ENCODE measurements at regions of chr6 and their contacts with region 1.

Region 1: DNA sequence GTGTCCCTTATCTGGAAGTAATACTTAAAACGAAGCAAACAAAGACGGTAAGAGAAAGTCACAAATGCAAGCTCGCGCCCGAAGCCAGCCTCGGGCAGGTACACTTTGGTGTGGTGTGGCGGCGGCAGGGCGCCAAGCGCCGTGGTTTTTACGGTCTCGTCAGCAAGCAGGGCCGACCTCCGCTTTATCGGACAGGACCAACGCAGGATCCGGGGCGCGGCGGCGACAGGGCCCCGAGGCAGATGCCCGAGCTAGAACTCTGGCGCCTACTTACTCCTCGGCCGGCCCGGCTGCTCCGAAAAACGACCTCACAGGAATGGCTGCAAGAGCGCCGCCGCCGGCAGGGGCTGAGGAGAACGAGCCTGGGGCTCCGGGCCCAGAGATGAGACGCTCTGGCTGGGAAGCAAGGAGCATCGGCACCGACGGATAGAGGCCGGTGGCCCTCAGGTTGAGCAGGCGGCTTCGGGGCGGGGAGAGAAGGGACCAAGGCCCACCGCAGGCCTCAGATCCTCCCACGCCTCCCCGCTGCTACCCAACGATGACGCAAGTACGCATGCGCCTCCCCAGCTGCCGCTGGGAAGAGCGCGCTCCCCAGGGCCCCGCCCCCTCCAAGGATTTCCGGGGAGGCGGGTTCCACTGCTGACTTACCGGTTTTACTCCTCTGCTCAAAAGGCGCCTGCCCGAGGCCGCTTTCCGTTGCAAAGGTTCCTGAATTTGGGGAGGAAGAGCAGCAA is 60.6 kb downstream of the FAM217A start:
- DNase-seq: peak; percentile 97
- H3K4me3 Mint-ChIP-seq: peak overlapping the region; percentile 96
- H3K27ac Mint-ChIP-seq: peak overlapping the region; percentile 97
- H3K4me1 Mint-ChIP-seq: peaks cover 42% of the 10 kb centered on the region
- H3K27me3 Mint-ChIP-seq: no peaks in the 10 kb centered on the region
- CTCF ChIP-seq: peak; percentile 39

Region 2: GRCh38 chr6:3919130-3919628 is 99.2 kb before region 1 on chr6:
- CTCF ChIA-PET with region 1: interaction called, 4 read pairs
- POLR2A ChIA-PET with region 1: interaction called, 13 read pairs
- intact Hi-C with region 1: no loop called
- DNase-seq: peak; percentile 85
- H3K4me3 Mint-ChIP-seq: no peak overlapping the region
- H3K27ac Mint-ChIP-seq: peak overlapping the region; percentile 84
- H3K4me1 Mint-ChIP-seq: peaks cover 21% of the 10 kb centered on the region
- H3K27me3 Mint-ChIP-seq: no peaks in the 10 kb centered on the region
- CTCF ChIP-seq: no peak

Region 3: DNA sequence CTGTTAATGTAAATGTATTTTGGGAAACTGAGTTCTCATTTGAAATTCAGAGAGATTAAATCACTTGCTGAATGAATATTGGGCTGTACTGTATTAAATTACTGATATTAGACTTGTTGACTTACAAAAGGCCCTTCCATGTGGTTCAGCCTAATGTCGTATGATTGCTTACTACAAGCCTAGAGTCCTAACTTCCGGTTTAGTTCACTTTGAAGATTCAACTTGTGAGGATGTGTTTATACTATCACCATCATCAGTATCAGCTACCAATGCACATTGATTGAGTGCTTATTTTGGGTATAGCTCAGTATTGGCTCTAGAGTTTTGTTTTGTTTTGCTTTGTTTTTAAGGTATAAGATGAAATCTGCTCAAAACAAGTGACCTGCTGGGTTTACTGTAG is 12.3 kb after region 1 on chr6:
- CTCF ChIA-PET with region 1: no interaction called
- POLR2A ChIA-PET with region 1: interaction called, 14 read pairs
- intact Hi-C with region 1: no loop called
- DNase-seq: no peak
- H3K4me3 Mint-ChIP-seq: no peak overlapping the region
- H3K27ac Mint-ChIP-seq: no peak overlapping the region
- H3K4me1 Mint-ChIP-seq: peaks cover 37% of the 10 kb centered on the region
- H3K27me3 Mint-ChIP-seq: no peaks in the 10 kb centered on the region
- CTCF ChIP-seq: no peak

Region 4: DNA sequence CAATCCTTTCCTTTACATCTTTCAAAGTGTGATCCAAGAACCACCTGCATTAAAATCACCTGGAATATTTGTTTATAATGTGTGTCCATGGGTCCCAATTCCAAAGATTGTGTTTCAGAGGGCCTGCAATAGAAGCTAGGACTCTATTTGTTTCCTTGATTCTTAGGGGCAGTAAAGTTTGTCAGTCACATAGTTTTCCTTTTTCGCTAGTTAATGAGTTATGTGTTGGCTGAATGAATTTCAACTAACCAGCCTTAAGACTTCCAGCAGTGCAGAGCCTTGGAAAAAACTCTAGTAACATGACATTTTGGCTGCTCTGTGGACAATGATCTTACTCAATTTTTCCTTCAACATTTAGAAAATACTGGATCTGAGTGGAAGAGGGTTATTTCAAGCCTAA is 49.3 kb after region 1 on chr6:
- CTCF ChIA-PET with region 1: no interaction called
- POLR2A ChIA-PET with region 1: no interaction called
- intact Hi-C with region 1: no loop called
- DNase-seq: no peak
- H3K4me3 Mint-ChIP-seq: no peak overlapping the region
- H3K27ac Mint-ChIP-seq: no peak overlapping the region
- H3K4me1 Mint-ChIP-seq: no peaks in the 10 kb centered on the region
- H3K27me3 Mint-ChIP-seq: no peaks in the 10 kb centered on the region
- CTCF ChIP-seq: no peak

Region 5: DNA sequence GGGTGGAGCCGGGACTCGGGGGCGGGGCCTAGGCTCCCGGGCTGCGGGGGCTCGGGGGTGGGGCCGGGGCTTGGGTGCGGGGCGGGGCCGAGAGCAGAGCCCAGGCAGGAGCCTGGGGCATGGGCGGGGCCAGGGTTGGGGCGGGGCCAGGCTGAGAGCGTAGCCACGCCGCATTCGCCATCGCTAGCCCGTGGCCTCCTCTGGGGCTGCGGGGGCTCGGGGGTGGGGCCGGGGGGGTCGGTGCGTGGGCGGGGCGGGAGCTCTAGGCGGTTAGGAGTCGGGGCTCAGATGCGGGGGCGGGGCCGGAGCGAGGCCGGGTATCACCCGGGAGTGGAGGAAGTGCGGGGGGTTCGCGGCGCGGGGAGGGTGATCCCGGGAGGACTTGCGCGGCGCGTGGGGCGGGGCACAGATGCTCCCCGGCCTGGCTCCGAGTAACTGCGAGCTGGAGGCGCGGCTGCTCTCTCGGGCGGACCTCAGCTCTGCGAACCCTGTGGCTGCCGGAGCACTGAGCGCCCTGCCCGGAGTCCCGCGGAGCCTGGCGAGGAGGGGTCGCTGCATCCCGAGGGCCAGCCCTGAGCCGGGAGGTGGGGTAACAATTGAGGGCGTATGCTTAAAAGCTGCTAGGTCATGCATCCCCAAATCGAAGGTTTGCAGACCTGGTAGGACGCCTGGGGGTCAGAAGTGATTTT is 117.5 kb after region 1 on chr6:
- CTCF ChIA-PET with region 1: interaction called, 4 read pairs
- POLR2A ChIA-PET with region 1: interaction called, 47 read pairs
- intact Hi-C with region 1: no loop called
- DNase-seq: peak; percentile 88
- H3K4me3 Mint-ChIP-seq: peak overlapping the region; percentile 90
- H3K27ac Mint-ChIP-seq: peak overlapping the region; percentile 35
- H3K4me1 Mint-ChIP-seq: peaks cover 19% of the 10 kb centered on the region
- H3K27me3 Mint-ChIP-seq: no peaks in the 10 kb centered on the region
- CTCF ChIP-seq: no peak